Activated B cell treated with CpG ODN at 0.5 μM for 24 hours (primary cell): ENCODE measurements at regions of chr2 and their contacts with region 1.

Region 1: GRCh38 chr2:149017116-149017985 is 21.1 kb upstream of the LYPD6B start:
- DNase-seq: peak; percentile 41
- ATAC-seq: peak; percentile 39
- H3K4me3 Mint-ChIP-seq: no peak overlapping the region
- H3K27ac Mint-ChIP-seq: no peak overlapping the region
- H3K4me1 Mint-ChIP-seq: peaks cover 44% of the 10 kb centered on the region
- H3K27me3 Mint-ChIP-seq: no peaks in the 10 kb centered on the region
- CTCF ChIP-seq: peak; percentile 66

Region 2: GRCh38 chr2:149027590-149028218 is 10.4 kb after region 1 on chr2:
- CTCF ChIA-PET with region 1: interaction called, 15 read pairs
- POLR2A ChIA-PET with region 1: interaction called, 3 read pairs
- intact Hi-C with region 1: no loop called
- DNase-seq: no peak
- ATAC-seq: no peak
- H3K4me3 Mint-ChIP-seq: no peak overlapping the region
- H3K27ac Mint-ChIP-seq: no peak overlapping the region
- H3K4me1 Mint-ChIP-seq: peaks cover 24% of the 10 kb centered on the region
- H3K27me3 Mint-ChIP-seq: no peaks in the 10 kb centered on the region
- CTCF ChIP-seq: no peak

Region 3: DNA sequence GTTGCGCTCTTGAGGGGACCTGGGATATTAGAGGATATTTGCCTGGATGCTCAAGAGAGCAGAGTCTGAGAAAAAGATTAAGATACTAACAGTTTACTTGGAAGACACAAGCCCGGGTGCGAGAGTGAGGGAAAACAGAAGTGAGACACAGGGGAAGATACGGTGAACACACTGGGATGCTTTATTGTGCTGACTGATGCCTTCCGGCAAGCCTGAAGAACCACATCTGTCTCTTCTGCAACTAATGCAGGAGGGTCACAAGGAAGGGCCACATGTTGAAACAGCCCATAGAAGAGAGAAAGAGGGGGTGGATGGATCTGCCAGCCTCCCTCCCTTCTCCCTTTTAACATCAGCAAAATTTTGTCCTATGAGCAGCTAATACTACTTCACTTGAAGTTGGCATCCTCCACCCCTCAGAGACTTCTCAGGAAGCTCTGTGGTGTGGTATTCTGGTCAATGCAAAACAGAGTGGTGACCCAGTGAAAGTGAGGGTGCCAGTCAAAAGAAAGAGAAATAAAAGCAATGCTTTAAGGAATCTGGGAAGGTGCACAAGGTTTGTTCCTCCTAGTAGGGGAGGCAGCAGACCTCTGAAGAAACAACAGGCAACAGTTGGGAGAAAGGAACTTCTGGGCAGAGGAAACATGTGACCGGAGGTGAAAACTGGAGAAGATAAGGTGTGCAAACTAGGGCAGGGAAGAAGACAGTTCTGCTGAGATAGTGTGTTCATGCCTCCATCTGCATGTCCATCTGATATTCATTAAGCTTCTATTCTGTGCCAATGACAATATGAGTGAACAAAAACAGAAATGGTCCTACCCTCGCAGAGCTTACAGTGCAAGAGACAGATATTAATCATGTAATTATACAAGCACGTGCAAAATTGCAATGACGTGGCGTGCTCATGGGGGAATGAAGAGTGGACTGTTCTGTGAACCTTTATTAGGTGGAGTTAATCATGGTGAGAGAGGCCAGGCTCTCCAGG is 128.3 kb after region 1 on chr2:
- CTCF ChIA-PET with region 1: interaction called, 3 read pairs
- POLR2A ChIA-PET with region 1: no interaction called
- intact Hi-C with region 1: loop called (anchors 5 kb)
- DNase-seq: no peak
- ATAC-seq: peak; percentile 47
- H3K4me3 Mint-ChIP-seq: peak overlapping the region; percentile 40
- H3K27ac Mint-ChIP-seq: no peak overlapping the region
- H3K4me1 Mint-ChIP-seq: peaks cover 15% of the 10 kb centered on the region
- H3K27me3 Mint-ChIP-seq: peaks cover 16% of the 10 kb centered on the region
- CTCF ChIP-seq: no peak

Region 4: GRCh38 chr2:149330126-149331022 is 313.0 kb after region 1 on chr2 and contains the start of gene LYPD6:
- CTCF ChIA-PET with region 1: no interaction called
- POLR2A ChIA-PET with region 1: no interaction called
- intact Hi-C with region 1: loop called (anchors 1 kb)
- DNase-seq: no peak
- ATAC-seq: peak; percentile 57
- H3K4me3 Mint-ChIP-seq: peak within 1 kb of the TSS; percentile 74
- H3K27ac Mint-ChIP-seq: no peak within 1 kb of the TSS
- H3K4me1 Mint-ChIP-seq: peaks cover 16% of the 10 kb centered on the region
- H3K27me3 Mint-ChIP-seq: peaks cover 43% of the 10 kb centered on the region
- CTCF ChIP-seq: no peak
- total RNA-seq, gene LYPD6: not detected in 2 replicates